BJ (cell line): ENCODE measurements at regions of chr17 and their contacts with region 1.

Region 1: DNA sequence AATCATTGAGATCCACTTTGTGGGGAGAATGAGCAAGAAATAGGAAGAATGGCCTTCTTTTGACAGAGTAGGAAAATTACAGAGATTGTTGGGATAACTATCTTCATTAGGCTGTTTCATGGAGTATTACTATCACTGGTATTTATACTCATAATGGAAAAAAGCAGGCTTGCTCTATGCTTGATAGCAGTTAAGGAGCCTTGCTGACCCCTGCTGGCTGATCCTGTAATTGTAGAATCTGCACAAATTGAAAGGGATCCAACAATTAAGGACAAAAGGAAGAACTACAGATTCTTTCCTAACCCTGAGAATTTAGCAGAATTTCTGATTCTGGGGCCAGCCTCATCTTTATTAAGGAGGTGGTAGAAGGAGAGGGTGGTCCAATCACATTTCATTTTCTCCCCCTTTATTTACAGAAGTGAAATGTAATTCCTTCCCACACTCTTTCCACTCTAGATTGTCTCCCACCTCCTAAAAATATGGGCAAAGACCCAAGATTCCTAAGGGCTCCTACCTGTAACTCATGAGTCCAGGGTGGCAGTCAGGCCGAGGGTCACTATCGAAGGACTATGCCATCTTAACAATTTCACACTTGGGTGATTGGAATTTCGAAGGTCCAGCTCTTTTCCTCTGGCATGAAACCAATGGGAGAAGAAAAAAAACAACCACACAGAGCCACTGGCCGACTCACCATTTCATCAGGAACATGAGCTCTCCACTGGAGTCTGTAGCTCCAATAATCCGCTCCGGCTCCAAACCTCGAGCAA is 26.3 kb downstream of the NFE2L1 start:
- DNase-seq: no peak
- H3K4me3 ChIP-seq: no peak overlapping the region
- H3K27me3 ChIP-seq: no peaks in the 10 kb centered on the region
- CTCF ChIP-seq: peak; percentile 81

Region 2: GRCh38 chr17:48037036-48037837 is 37.3 kb before region 1 on chr17 and contains the start of gene COPZ2:
- CTCF ChIA-PET with region 1: interaction called, 200 read pairs
- POLR2A ChIA-PET with region 1: no interaction called
- DNase-seq: no peak
- H3K4me3 ChIP-seq: peak within 1 kb of the TSS; percentile 78
- H3K27me3 ChIP-seq: no peaks in the 10 kb centered on the region
- CTCF ChIP-seq: peak; percentile 79
- polyA plus RNA-seq, gene COPZ2: 132 and 181 TPM in 2 replicates

Region 3: GRCh38 chr17:48093341-48094045 is 19.0 kb after region 1 on chr17:
- CTCF ChIA-PET with region 1: interaction called, 56 read pairs
- POLR2A ChIA-PET with region 1: no interaction called
- DNase-seq: no peak
- H3K4me3 ChIP-seq: no peak overlapping the region
- H3K27me3 ChIP-seq: no peaks in the 10 kb centered on the region
- CTCF ChIP-seq: no peak

Region 4: GRCh38 chr17:48131216-48131824 is 56.8 kb after region 1 on chr17:
- CTCF ChIA-PET with region 1: interaction called, 11 read pairs
- POLR2A ChIA-PET with region 1: no interaction called
- DNase-seq: no peak
- H3K4me3 ChIP-seq: no peak overlapping the region
- H3K27me3 ChIP-seq: peaks cover 4% of the 10 kb centered on the region
- CTCF ChIP-seq: peak; percentile 87